Dendritic cell treated with granulocyte-macrophage colony-stimulating factor and Interleukin-4, amounts not matched to agents 40 ng/mL and 50 ng/mL, for 4 days (primary cell): ENCODE measurements at regions of chr22 and their contacts with region 1.

Region 1: DNA sequence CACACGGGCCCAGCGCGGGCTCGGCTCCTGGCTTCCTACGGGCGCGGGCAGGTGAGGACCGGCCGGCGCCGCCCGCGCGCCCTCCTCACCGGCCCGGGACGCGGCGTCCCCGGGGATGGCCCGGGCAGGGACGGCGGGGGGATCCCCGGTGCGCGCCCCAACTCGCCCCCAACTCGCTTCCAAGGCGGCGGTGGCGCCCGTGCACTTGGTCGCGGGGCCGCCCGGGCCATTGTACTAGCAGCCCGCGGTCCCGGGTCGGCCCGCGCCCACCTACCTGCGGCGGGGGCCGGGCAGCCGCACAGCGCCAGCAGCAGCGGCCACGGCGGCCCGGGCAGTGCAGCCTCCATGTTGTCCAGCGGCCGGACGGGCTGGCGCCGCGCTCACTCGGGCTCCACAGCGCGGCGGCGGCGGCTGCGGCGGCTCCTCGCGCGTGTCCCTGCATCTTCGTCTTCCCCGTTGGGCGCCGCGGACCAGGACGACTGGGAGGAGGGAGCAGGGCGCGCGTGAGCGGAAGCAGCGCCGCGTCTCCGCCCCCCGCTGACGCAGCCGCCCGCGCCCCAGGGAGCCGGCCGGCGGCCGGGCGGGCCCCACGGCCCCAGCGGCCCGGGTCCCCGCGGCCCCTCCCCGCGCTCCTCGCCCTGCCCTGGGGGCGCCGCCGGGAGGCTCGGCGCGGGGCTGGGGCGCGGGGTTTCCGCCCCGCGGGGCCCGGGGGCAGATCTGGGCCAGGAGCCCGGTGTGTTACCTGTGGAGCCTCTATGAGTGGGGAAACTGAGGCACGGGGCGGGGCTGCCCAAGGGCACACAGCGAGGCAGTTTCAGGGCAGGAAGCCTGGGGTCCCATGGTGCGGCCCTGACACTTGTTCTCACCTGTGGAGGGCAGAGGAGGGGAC is 159.3 kb upstream of the GRK3 start:
- H3K4me3 Mint-ChIP-seq: peak overlapping the region; percentile 79
- H3K27ac Mint-ChIP-seq: peak overlapping the region; percentile 76
- H3K4me1 Mint-ChIP-seq: peaks cover 63% of the 10 kb centered on the region
- H3K27me3 Mint-ChIP-seq: no peaks in the 10 kb centered on the region

Region 2: DNA sequence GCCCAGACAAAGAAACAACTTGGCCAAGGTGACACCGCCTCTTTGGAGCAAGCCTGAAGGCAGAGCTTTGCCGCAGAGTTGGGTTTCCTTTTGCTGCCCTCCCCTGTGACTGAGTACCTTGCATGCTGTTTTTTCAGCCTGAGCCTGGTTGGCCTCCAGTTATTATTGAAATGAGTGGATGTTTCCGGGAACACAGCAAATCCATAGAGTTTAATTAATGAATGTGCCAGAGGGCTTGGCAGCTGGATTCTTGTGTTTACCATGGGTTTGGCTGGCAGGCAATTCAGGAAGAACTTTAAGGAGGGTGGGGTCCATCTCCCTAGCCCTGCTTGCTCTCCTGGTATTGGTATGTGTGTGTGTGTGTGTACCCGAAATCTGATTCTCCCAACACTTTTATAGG is 271.1 kb before region 1 on chr22:
- intact Hi-C with region 1: no loop called
- H3K4me3 Mint-ChIP-seq: no peak overlapping the region
- H3K27ac Mint-ChIP-seq: no peak overlapping the region
- H3K4me1 Mint-ChIP-seq: no peaks in the 10 kb centered on the region
- H3K27me3 Mint-ChIP-seq: peaks cover 2% of the 10 kb centered on the region

Region 3: DNA sequence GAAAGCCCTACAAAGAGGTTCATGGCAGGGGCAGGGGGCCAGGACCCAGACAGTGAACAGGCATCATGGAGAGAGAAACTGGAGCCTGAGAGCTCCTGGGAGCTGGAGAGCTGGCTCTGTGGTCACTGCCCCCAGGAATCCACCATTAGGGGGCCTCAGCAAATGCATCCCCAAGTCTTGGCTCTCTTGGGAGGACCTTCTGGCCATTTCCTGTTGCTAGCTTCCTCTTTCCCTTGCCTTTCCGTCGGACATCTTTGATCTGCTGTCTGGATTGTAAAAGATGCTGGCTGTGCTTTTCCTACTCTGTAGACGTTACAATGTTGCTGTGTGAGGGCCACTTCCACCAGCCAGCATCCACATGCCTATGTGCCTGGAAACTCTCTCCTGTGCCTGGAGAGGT is 192.8 kb before region 1 on chr22:
- intact Hi-C with region 1: no loop called
- H3K4me3 Mint-ChIP-seq: no peak overlapping the region
- H3K27ac Mint-ChIP-seq: no peak overlapping the region
- H3K4me1 Mint-ChIP-seq: no peaks in the 10 kb centered on the region
- H3K27me3 Mint-ChIP-seq: no peaks in the 10 kb centered on the region

Region 4: GRCh38 chr22:25375683-25376082 is 29.5 kb before region 1 on chr22:
- intact Hi-C with region 1: no loop called
- H3K4me3 Mint-ChIP-seq: no peak overlapping the region
- H3K27ac Mint-ChIP-seq: no peak overlapping the region
- H3K4me1 Mint-ChIP-seq: peaks cover 29% of the 10 kb centered on the region
- H3K27me3 Mint-ChIP-seq: no peaks in the 10 kb centered on the region

Region 5: GRCh38 chr22:25419237-25420113 is 14.3 kb after region 1 on chr22:
- intact Hi-C with region 1: loop called (anchors 1 kb)
- H3K4me3 Mint-ChIP-seq: peak overlapping the region; percentile 79
- H3K27ac Mint-ChIP-seq: peak overlapping the region; percentile 85
- H3K4me1 Mint-ChIP-seq: peaks cover 34% of the 10 kb centered on the region
- H3K27me3 Mint-ChIP-seq: peaks cover 16% of the 10 kb centered on the region

Region 6: DNA sequence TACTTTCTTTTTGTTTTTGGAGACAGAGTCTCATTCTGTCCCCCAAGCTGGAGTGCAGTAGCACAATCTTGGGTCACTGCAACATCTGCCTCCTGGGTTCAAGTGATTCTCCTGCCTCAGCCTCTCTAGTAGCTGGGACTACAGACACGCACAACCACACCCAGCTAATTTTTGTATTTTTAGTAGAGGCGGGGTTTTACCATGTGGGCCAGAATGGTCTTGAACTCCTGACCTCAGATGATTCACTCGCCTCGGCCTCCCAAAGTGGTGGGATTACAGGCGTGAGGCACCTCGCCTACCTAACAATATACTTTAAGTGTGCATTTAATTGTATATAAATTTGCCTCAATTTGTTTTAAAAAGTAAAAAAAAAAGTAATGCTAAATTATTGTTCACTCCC is 197.7 kb after region 1 on chr22:
- intact Hi-C with region 1: no loop called
- H3K4me3 Mint-ChIP-seq: no peak overlapping the region
- H3K27ac Mint-ChIP-seq: no peak overlapping the region
- H3K4me1 Mint-ChIP-seq: peaks cover 49% of the 10 kb centered on the region
- H3K27me3 Mint-ChIP-seq: no peaks in the 10 kb centered on the region